CD8-positive, alpha-beta T cell (primary cell): ENCODE measurements at regions of chr14 and their contacts with region 1.

Region 1: GRCh38 chr14:73728717-73729330 is 14.6 kb upstream of the PNMA1 start:
- DNase-seq: peak; percentile 70 to 95 (median 86)
- ATAC-seq: peak; percentile 93
- H3K4me3 ChIP-seq: no peak overlapping the region
- H3K4me3 Mint-ChIP-seq: no peak overlapping the region
- H3K27ac ChIP-seq: peak overlapping the region in 1 of 2 experiments; percentile 23
- H3K27ac Mint-ChIP-seq: peak overlapping the region; percentile 79
- H3K4me1 ChIP-seq: no peaks in the 10 kb centered on the region
- H3K4me1 Mint-ChIP-seq: peaks cover 13% of the 10 kb centered on the region
- H3K27me3 ChIP-seq: no peaks in the 10 kb centered on the region
- H3K27me3 Mint-ChIP-seq: no peaks in the 10 kb centered on the region
- CTCF ChIP-seq: peak; percentile 97

Region 2: DNA sequence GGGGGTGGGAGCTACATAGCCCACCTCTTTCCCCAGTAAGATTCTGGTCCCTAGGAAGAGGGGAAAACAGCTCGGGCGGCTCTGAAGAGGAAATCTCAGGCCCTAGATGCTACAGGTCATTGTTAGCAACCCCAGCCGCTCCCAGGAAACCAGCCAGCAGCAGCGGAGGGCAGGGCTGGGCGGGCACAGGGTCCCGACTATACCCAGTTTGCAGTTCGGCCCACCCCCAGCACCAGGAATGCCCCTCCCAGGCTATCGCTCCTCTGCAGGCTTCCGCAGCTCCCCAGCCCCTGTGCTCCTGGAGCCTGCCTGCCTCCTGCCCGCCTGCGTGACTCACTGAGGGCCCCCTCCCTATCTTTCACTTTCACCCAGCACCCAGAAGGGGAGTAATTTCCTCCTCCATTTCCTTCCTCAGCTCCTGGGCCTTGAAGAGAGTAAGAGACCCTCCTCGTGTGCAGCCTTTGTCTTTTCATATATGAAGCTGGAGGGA is 12.6 kb after region 1 on chr14:
- CTCF ChIA-PET with region 1: interaction called, 98 read pairs
- POLR2A ChIA-PET with region 1: interaction called, 3 read pairs
- intact Hi-C with region 1: no loop called
- DNase-seq: peak in 7 of 9 experiments; percentile 61 to 86 (median 75)
- ATAC-seq: peak; percentile 79
- H3K4me3 ChIP-seq: peak overlapping the region; percentile 25 to 42
- H3K4me3 Mint-ChIP-seq: peak overlapping the region; percentile 80
- H3K27ac ChIP-seq: peak overlapping the region; percentile 29 to 83
- H3K27ac Mint-ChIP-seq: peak overlapping the region; percentile 94
- H3K4me1 ChIP-seq: peaks cover 82% of the 10 kb centered on the region
- H3K4me1 Mint-ChIP-seq: peaks cover 74% of the 10 kb centered on the region
- H3K27me3 ChIP-seq: no peaks in the 10 kb centered on the region
- H3K27me3 Mint-ChIP-seq: no peaks in the 10 kb centered on the region
- CTCF ChIP-seq: no peak

Region 3: DNA sequence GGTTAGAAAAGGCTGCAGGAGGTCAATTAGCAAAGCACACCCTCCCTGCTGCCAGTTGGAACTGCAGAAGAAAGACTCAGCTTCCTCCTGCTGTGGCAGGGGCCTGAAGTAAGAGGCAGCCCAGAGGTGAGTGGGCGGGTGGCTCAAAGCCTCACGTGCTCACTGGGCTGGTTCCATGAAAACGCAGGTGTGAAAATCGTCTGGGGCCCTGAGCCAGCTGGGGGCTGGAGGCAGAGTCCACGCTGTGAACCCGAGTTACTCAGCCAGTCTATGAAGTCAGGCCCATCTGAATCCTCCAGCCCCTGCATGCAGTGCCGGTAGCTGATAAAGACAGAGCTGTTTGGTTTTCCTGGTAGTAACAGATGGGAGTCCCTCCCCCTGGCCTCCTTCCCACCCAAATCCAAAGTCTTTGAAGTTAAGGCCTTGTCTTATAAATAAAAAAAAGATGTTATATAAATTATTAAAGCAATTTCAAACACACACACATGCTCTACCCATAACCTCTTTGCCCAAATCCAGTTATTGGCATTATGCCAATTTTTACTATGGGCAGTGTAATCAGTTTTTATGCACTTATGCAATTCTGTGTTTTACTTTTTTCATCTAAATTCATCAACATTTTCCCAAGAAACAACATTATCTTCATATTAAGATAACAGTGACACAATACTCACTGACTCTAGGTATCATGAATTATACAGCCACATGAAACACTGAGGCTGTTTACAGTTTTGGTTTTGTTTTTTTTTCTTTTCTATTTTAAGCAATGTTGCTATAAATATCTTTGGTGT is 43.2 kb after region 1 on chr14:
- CTCF ChIA-PET with region 1: interaction called, 29 read pairs
- POLR2A ChIA-PET with region 1: no interaction called
- intact Hi-C with region 1: loop called (anchors 1 to 2 kb)
- DNase-seq: peak in 7 of 9 experiments; percentile 45 to 86 (median 74)
- ATAC-seq: peak; percentile 75
- H3K4me3 ChIP-seq: peak overlapping the region; percentile 1 to 38
- H3K4me3 Mint-ChIP-seq: peak overlapping the region; percentile 66
- H3K27ac ChIP-seq: peak overlapping the region; percentile 41 to 77
- H3K27ac Mint-ChIP-seq: peak overlapping the region; percentile 94
- H3K4me1 ChIP-seq: peaks cover 70% of the 10 kb centered on the region
- H3K4me1 Mint-ChIP-seq: peaks cover 74% of the 10 kb centered on the region
- H3K27me3 ChIP-seq: no peaks in the 10 kb centered on the region
- H3K27me3 Mint-ChIP-seq: no peaks in the 10 kb centered on the region
- CTCF ChIP-seq: no peak

Region 4: DNA sequence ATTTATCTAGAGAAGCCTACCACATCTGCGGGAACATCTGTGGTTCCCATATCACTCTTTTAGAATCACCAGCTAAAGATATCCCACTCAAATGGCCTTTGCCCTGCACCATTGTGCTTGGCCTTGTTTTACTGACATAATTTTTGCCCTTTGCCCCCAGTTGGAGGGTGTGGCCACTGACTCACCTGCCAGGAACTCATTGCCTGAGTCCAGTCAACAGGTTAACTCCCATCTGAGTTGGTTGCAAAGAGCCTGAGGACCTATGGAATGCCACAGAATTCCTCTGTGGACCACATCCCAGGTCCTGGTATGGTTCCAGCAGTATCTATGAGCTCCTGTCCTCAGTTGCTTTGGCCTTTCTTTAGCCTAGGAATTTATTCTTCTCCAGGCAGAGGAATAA is 67.1 kb after region 1 on chr14:
- CTCF ChIA-PET with region 1: interaction called, 10 read pairs
- POLR2A ChIA-PET with region 1: no interaction called
- intact Hi-C with region 1: no loop called
- DNase-seq: no peak
- ATAC-seq: no peak
- H3K4me3 ChIP-seq: no peak overlapping the region
- H3K4me3 Mint-ChIP-seq: no peak overlapping the region
- H3K27ac ChIP-seq: no peak overlapping the region
- H3K27ac Mint-ChIP-seq: no peak overlapping the region
- H3K4me1 ChIP-seq: no peaks in the 10 kb centered on the region
- H3K4me1 Mint-ChIP-seq: no peaks in the 10 kb centered on the region
- H3K27me3 ChIP-seq: no peaks in the 10 kb centered on the region
- H3K27me3 Mint-ChIP-seq: peaks cover 2% of the 10 kb centered on the region
- CTCF ChIP-seq: no peak

Region 5: DNA sequence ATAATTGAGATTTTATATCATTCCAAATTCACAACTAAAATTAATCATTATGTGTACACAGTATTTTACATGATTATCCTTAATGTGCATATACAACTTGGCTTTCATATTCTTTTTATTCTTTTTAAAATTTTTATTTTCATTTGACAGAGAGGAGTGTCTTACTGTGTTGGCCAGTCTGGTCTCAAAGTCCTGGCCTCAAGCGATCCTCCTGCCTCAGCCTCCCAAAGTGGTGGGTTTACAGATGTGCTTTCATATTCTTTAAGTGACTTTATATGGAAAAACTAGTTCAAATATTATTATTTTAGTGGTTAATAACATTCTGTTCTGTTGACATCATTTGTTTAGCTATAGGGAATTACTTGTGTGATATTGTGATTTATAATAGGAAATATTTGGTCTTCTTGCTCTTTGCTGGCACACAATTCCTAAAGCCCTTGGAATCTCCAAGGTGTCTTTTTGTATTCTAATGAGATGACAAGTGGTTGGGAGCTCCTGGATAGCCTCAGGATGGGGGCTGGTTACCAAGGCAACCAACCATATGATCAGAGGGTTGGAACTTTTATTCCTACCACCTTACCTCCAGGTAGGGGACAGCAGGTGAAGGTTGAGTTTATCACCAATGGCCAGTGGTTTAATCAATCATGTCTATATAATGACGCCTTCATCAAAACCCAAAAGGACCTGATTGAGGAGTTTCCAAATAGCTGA is 141.9 kb after region 1 on chr14:
- CTCF ChIA-PET with region 1: interaction called, 15 read pairs
- POLR2A ChIA-PET with region 1: no interaction called
- intact Hi-C with region 1: loop called in 1 of 2 experiments (anchors 2 kb)
- DNase-seq: no peak
- ATAC-seq: no peak
- H3K4me3 ChIP-seq: no peak overlapping the region
- H3K4me3 Mint-ChIP-seq: no peak overlapping the region
- H3K27ac ChIP-seq: no peak overlapping the region
- H3K27ac Mint-ChIP-seq: no peak overlapping the region
- H3K4me1 ChIP-seq: no peaks in the 10 kb centered on the region
- H3K4me1 Mint-ChIP-seq: no peaks in the 10 kb centered on the region
- H3K27me3 ChIP-seq: no peaks in the 10 kb centered on the region
- H3K27me3 Mint-ChIP-seq: no peaks in the 10 kb centered on the region
- CTCF ChIP-seq: no peak

Region 6: DNA sequence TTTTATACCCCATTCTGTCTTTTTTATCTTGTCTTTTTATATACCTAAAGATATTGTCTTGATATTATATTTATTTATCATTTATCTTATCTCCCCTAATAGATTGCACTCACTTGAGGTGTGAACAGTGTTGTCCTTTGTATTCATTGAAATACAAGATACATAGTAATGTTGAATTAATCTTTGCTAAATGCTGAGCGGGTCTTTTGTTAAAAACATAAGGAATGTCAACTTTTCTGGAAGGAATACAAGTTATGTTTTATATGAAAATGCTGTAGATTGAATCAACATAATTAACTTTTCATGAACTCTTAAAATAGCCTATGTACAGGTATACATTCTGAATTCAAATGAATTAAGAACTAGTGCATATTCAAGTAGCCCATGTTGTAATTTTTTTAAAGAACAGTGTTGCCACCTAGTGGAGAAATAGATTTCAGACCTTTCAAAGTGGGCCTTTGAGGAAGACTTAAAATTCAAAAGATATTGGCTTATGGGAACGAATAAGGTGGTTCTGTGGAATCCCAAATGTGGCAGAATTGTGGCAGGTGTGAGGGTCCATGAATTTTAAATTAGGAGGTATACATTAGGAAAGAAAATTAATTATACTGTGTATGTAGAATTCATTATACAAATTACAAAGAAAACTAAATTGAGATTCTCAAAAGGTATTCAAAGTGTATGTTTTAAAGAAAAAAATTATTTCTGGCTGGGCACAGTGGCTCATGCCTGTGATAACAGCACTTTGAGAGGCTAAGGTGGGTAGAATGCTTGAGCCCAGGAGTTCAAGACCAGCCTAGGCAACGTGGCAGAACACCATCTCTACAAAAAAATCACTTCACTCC is 309.4 kb after region 1 on chr14:
- CTCF ChIA-PET with region 1: no interaction called
- POLR2A ChIA-PET with region 1: no interaction called
- intact Hi-C with region 1: loop called in 1 of 2 experiments (anchors 1 kb)
- DNase-seq: peak in 2 of 9 experiments; percentile 58 to 69
- ATAC-seq: peak; percentile 58
- H3K4me3 ChIP-seq: no peak overlapping the region
- H3K4me3 Mint-ChIP-seq: no peak overlapping the region
- H3K27ac ChIP-seq: no peak overlapping the region
- H3K27ac Mint-ChIP-seq: no peak overlapping the region
- H3K4me1 ChIP-seq: no peaks in the 10 kb centered on the region
- H3K4me1 Mint-ChIP-seq: no peaks in the 10 kb centered on the region
- H3K27me3 ChIP-seq: no peaks in the 10 kb centered on the region
- H3K27me3 Mint-ChIP-seq: no peaks in the 10 kb centered on the region
- CTCF ChIP-seq: peak; percentile 88